CD4-positive, alpha-beta memory T cell (primary cell): ENCODE measurements at regions of chr13 and their contacts with region 1.

Region 1: GRCh38 chr13:41668130-41668757 is 210.9 kb downstream of the RGCC start:
- DNase-seq: peak; percentile 34 to 56 (median 43)
- H3K4me3 ChIP-seq: no peak overlapping the region
- H3K4me3 Mint-ChIP-seq: no peak overlapping the region
- H3K27ac ChIP-seq: no peak overlapping the region
- H3K27ac Mint-ChIP-seq: peak overlapping the region in 1 of 7 donors; percentile 9
- H3K4me1 ChIP-seq: no peaks in the 10 kb centered on the region
- H3K4me1 Mint-ChIP-seq: no peaks in the 10 kb centered on the region
- H3K27me3 ChIP-seq: no peaks in the 10 kb centered on the region
- H3K27me3 Mint-ChIP-seq: no peaks in the 10 kb centered on the region

Region 2: DNA sequence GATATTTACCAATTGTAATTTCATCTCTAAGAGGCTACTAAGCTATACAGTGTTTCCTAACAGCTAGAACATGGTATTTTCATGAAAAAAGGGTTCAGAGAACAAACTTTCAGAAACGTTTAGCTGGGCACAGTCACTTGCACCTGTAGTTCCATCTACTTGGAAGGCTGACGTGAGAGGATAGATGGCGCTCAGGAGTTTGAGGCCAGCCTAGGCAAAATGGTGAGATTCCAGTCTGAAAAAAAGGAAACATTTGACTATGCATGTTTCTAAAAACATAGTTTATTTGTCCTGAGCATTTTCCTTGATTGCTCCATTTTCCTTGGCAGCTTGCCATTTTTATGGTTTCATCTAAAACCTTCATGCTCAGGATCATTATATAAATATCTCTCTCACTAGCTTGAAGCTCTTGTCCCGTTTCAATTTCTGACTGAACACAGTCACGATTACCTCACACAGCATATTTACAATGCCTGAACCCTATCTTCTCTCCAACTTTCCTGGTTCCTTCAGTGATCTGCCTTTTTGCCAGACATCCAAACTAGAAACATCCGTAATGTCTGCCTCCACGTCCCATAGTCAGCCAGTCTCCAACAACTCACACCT is 10.1 kb before region 1 on chr13:
- CTCF ChIA-PET with region 1: interaction called, 23 read pairs
- POLR2A ChIA-PET with region 1: no interaction called
- intact Hi-C with region 1: no loop called
- DNase-seq: no peak
- H3K4me3 ChIP-seq: no peak overlapping the region
- H3K4me3 Mint-ChIP-seq: no peak overlapping the region
- H3K27ac ChIP-seq: no peak overlapping the region
- H3K27ac Mint-ChIP-seq: peak overlapping the region in 3 of 7 donors; percentile 16 to 77 (median 39)
- H3K4me1 ChIP-seq: no peaks in the 10 kb centered on the region
- H3K4me1 Mint-ChIP-seq: peaks cover 4 to 5% (median 5%) of the 10 kb centered on the region in 4 donors
- H3K27me3 ChIP-seq: no peaks in the 10 kb centered on the region
- H3K27me3 Mint-ChIP-seq: no peaks in the 10 kb centered on the region

Region 3: DNA sequence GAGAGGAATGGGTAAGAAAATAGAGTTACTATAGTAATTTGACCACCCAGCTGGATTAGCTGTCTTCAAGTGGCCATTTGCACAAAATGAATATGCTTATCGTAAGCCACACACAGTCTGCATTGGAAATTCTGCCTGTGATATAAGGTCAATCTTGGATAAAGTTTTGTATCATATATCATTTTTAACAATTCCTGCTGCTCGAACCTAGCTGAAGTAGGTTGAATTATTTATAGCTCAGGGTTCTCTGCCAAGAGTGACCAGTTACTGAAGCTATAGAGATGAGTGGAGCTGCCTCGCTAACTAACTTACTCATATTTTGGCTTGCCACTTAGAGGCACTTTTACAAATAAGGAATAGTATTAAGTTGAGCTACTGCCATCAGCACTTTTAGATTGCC is 10.0 kb after region 1 on chr13:
- CTCF ChIA-PET with region 1: interaction called, 28 read pairs
- POLR2A ChIA-PET with region 1: no interaction called
- intact Hi-C with region 1: no loop called
- DNase-seq: no peak
- H3K4me3 ChIP-seq: no peak overlapping the region
- H3K4me3 Mint-ChIP-seq: no peak overlapping the region
- H3K27ac ChIP-seq: no peak overlapping the region
- H3K27ac Mint-ChIP-seq: no peak overlapping the region
- H3K4me1 ChIP-seq: no peaks in the 10 kb centered on the region
- H3K4me1 Mint-ChIP-seq: peaks cover 0 to 4% (median 0%) of the 10 kb centered on the region in 4 donors
- H3K27me3 ChIP-seq: no peaks in the 10 kb centered on the region
- H3K27me3 Mint-ChIP-seq: no peaks in the 10 kb centered on the region

Region 4: GRCh38 chr13:43036351-43037250 is 1368.4 kb after region 1 on chr13:
- CTCF ChIA-PET with region 1: no interaction called
- POLR2A ChIA-PET with region 1: no interaction called
- intact Hi-C with region 1: no loop called
- DNase-seq: no peak
- H3K4me3 ChIP-seq: no peak overlapping the region
- H3K4me3 Mint-ChIP-seq: no peak overlapping the region
- H3K27ac ChIP-seq: no peak overlapping the region
- H3K27ac Mint-ChIP-seq: peak overlapping the region in 1 of 7 donors; percentile 53
- H3K4me1 ChIP-seq: peaks cover 4% of the 10 kb centered on the region
- H3K4me1 Mint-ChIP-seq: peaks cover 16 to 37% (median 32%) of the 10 kb centered on the region in 4 donors
- H3K27me3 ChIP-seq: no peaks in the 10 kb centered on the region
- H3K27me3 Mint-ChIP-seq: no peaks in the 10 kb centered on the region